Motor neuron (in vitro differentiated cells): ENCODE measurements at regions of chr20 and their contacts with region 1.

Region 1: GRCh38 chr20:57654363-57654997 is 34.3 kb upstream of the ZBP1 start:
- ATAC-seq: peak; percentile 77 to 97 (median 84)
- H3K4me3 ChIP-seq: no peak overlapping the region
- H3K27ac ChIP-seq: no peak overlapping the region
- H3K4me1 ChIP-seq: peaks cover 0 to 7% of the 10 kb centered on the region in 2 donors

Region 2: GRCh38 chr20:58087193-58087858 is 432.8 kb after region 1 on chr20:
- in situ Hi-C with region 1: loop called in 2 of 9 experiments (anchors 25 kb)
- ATAC-seq: peak in 4 of 8 experiments; percentile 32 to 56 (median 39)
- H3K4me3 ChIP-seq: no peak overlapping the region
- H3K27ac ChIP-seq: no peak overlapping the region
- H3K4me1 ChIP-seq: no peaks in the 10 kb centered on the region

Region 3: DNA sequence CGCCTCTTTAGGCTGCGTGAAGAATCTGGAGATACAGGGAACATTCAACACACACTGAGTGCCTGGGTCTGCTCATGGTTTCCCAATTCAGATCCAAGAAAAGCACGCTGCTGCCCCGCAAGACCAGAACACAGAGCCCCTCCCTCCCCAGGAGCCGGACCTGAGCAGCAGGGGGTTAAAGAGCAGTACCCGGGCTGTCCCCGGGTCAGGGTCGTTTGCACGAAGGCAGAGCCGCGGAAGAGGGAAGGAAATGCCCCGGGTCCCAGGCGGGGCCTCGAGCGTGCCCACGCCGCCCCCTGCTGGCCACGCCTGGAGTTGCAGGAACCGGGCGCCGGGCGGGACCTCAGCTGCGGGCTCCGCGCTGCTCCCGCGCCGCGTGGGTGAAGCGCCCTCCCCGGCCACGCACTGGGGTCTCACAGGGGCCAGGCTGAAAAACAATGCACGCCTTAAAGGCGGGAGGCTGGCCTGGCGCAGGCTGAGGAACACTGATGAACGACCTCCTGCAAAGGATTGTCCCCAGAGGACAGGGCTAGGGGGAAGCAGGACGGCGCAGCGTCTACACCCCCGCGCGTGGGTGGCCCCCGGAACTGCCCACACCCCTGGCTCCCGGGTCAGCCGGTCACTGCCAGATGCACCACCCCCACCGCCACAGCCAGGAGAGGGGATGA is 525.1 kb after region 1 on chr20:
- in situ Hi-C with region 1: loop called in 1 of 9 experiments (anchors 10 kb)
- ATAC-seq: peak; percentile 91 to 97 (median 94)
- H3K4me3 ChIP-seq: peak overlapping the region in 1 of 5 donors; percentile 19
- H3K27ac ChIP-seq: no peak overlapping the region
- H3K4me1 ChIP-seq: peaks cover 11 to 20% of the 10 kb centered on the region in 2 donors